Cardiac septum (tissue), 1 donor: ENCODE measurements at regions of chr6 and their contacts with region 1.

Region 1: GRCh38 chr6:42547407-42548329 is 16.2 kb upstream of the UBR2 start:
- DNase-seq: peak; percentile 94

Region 2: GRCh38 chr6:41914869-41915530 is 632.7 kb before region 1 on chr6:
- intact Hi-C with region 1: no loop called
- DNase-seq: no peak

Region 3: DNA sequence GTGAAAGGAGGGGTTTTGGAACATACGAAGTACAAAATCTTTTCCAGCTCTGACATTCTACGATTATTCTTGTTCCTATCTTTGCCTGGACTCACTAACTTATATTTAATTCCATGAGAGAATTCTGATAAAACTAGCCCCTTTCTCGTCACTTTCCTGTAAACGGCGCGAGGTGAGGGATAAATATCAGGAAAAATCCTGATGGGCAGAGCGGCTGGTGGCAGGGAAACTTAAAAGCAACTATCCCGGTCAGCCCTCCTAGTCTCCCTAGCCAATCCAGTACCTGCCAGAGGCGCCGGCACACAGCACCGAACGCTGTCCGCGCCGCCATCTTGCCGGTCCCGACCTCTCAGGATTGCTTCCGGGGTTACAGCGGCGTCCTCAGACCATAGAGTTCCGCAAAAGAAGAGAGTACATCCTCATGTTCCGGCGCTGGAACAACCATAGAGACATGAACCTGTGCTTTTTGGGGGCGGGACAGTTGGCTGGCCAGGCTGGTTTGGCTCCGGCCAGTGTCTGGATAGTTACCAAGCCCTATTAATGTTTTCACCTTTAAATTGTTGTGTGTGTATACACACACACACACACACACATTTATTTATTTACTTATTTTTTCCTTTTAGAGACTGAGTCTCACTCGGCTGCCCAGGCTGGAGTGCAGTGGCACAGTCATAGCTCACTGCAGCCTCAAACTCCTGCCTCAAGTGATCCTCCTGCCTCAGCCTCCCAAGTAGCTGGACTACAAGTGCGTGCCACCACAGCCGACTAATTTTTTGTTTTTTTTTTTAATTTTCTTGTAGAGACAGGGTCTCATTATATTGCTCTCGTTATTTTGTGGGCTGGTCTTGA is 329.9 kb before region 1 on chr6 and contains the start of gene MRPS10:
- intact Hi-C with region 1: loop called (anchors 5 kb)
- DNase-seq: peak; percentile 97
- total RNA-seq, gene MRPS10: 54.9 TPM

Region 4: GRCh38 chr6:42260972-42261371 is 286.7 kb before region 1 on chr6:
- intact Hi-C with region 1: loop called (anchors 5 kb)
- DNase-seq: no peak